ENCODE measurements at regions of chr13 and their contacts with region 1.

Region 1: GRCh38 chr13:46160471-46161066 is 21.4 kb downstream of the LCP1 start:
- DNase-seq: peak; percentile 85
- ATAC-seq: peak; percentile 66
- H3K4me3 ChIP-seq: no peak overlapping the region
- H3K4me3 Mint-ChIP-seq: peak overlapping the region; percentile 63
- H3K27ac ChIP-seq: peak overlapping the region; percentile 53 to 88
- H3K27ac Mint-ChIP-seq: peak overlapping the region; percentile 84
- H3K4me1 ChIP-seq: peaks cover 43 to 45% of the 10 kb centered on the region in 2 donors
- H3K4me1 Mint-ChIP-seq: peaks cover 50% of the 10 kb centered on the region
- H3K27me3 ChIP-seq: no peaks in the 10 kb centered on the region
- H3K27me3 Mint-ChIP-seq: no peaks in the 10 kb centered on the region
- CTCF ChIP-seq: peak; percentile 83

Region 2: DNA sequence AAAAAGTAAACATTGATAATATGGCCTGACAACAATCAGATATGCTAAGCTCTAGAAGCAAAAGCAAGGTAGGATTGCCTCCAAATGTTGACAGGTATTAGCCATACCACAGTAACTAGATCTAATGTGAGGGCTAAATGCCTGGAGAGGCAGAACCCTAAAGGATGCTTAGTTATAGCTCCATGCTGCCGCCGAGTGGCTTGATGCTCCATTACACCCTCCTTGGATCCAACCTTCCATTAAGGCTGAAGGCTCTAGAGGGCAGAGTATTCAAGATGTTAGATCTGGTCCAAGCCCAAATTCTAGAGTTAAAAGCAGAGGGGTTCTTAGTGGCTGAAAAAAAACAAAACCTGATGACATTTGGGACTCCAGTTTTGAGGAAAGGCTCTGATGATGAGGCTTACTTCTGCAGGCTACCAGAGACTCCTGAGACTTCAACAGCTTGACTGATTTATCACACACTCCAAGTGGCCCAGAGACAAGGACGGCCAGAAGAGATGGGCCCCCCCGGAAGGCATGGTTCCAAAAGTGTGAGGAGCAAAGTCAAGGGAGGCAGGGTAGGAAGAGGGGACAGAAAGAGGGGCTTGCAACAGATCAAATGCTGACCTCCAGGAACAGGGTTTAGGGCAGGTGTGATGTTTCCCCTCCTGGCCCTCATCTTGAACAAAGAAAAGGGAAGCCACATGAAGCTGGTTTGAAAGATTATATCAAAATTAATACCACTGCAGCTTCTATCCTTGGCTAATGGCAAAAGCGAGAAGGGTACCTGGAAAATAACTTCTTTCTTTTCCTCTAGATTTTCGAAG is 33.8 kb before region 1 on chr13:
- CTCF ChIA-PET with region 1: interaction called, 8 read pairs
- POLR2A ChIA-PET with region 1: no interaction called
- intact Hi-C with region 1: loop called (anchors 5 kb)
- DNase-seq: peak; percentile 74
- ATAC-seq: peak; percentile 92
- H3K4me3 ChIP-seq: no peak overlapping the region
- H3K4me3 Mint-ChIP-seq: no peak overlapping the region
- H3K27ac ChIP-seq: peak overlapping the region in 1 of 2 donors; percentile 78
- H3K27ac Mint-ChIP-seq: peak overlapping the region; percentile 88
- H3K4me1 ChIP-seq: peaks cover 13 to 16% of the 10 kb centered on the region in 2 donors
- H3K4me1 Mint-ChIP-seq: peaks cover 30% of the 10 kb centered on the region
- H3K27me3 ChIP-seq: no peaks in the 10 kb centered on the region
- H3K27me3 Mint-ChIP-seq: no peaks in the 10 kb centered on the region
- CTCF ChIP-seq: peak; percentile 80

Region 3: GRCh38 chr13:46146899-46147298 is 13.7 kb before region 1 on chr13:
- CTCF ChIA-PET with region 1: interaction called, 25 read pairs
- POLR2A ChIA-PET with region 1: no interaction called
- intact Hi-C with region 1: no loop called
- DNase-seq: no peak
- ATAC-seq: no peak
- H3K4me3 ChIP-seq: no peak overlapping the region
- H3K4me3 Mint-ChIP-seq: no peak overlapping the region
- H3K27ac ChIP-seq: no peak overlapping the region
- H3K27ac Mint-ChIP-seq: peak overlapping the region; percentile 20
- H3K4me1 ChIP-seq: no peaks in the 10 kb centered on the region
- H3K4me1 Mint-ChIP-seq: no peaks in the 10 kb centered on the region
- H3K27me3 ChIP-seq: no peaks in the 10 kb centered on the region
- H3K27me3 Mint-ChIP-seq: no peaks in the 10 kb centered on the region
- CTCF ChIP-seq: no peak

Region 4: DNA sequence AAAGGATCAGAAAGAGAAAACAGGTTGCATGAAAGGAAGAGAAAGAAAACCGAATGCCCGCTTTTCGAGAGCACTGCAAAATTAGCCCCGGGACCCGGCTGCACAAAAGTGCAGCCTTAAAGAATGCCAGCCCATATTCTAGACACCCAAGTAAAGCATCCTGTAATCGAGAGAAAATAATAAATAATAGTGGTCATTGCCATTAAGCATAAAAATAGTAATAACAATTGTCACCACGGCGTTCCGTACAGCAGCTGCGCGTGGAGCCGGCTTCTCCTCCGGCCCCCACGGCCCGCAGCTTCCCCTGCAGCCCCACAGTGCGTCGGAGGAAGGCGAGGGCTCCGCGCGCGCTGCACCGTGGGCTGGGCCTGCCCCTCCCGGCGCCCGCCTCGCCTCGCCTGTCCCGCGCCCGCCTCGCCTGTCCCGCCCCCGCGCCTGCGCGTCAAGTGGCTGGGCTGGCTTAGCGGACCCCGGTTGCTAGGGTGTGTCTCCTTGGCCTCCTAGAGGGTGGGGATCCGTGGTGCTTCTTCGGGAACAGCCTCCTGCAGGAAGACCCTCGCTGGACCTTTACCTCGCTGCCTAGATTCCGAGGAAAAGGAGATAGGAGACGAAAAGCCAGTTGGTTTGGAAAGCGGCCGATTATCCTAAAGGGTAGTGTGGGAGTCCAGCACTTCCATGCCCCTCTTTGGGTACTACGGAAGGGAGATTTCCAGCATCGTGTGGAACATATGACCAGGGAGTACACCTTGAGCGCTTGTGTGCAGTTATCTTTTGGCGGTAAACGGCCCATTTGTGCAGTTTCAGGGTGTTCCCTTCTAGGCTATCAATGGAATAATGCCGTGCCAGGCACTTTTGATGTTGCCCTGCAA is 51.1 kb after region 1 on chr13 and contains the start of gene LRRC63:
- CTCF ChIA-PET with region 1: interaction called, 4 read pairs
- POLR2A ChIA-PET with region 1: no interaction called
- intact Hi-C with region 1: loop called (anchors 1 kb)
- DNase-seq: peak; percentile 76
- ATAC-seq: peak; percentile 99
- H3K4me3 ChIP-seq: peak within 1 kb of the TSS; percentile 47 to 85 (median 63)
- H3K4me3 Mint-ChIP-seq: peak within 1 kb of the TSS; percentile 87
- H3K27ac ChIP-seq: no peak within 1 kb of the TSS
- H3K27ac Mint-ChIP-seq: peak within 1 kb of the TSS; percentile 59
- H3K4me1 ChIP-seq: peaks cover 10 to 11% of the 10 kb centered on the region in 2 donors
- H3K4me1 Mint-ChIP-seq: peaks cover 16% of the 10 kb centered on the region
- H3K27me3 ChIP-seq: no peaks in the 10 kb centered on the region
- H3K27me3 Mint-ChIP-seq: peaks cover 2% of the 10 kb centered on the region
- CTCF ChIP-seq: no peak
- total RNA-seq, gene LRRC63: 0.25 TPM in 1 of 2 replicates, not detected in the other

Region 5: DNA sequence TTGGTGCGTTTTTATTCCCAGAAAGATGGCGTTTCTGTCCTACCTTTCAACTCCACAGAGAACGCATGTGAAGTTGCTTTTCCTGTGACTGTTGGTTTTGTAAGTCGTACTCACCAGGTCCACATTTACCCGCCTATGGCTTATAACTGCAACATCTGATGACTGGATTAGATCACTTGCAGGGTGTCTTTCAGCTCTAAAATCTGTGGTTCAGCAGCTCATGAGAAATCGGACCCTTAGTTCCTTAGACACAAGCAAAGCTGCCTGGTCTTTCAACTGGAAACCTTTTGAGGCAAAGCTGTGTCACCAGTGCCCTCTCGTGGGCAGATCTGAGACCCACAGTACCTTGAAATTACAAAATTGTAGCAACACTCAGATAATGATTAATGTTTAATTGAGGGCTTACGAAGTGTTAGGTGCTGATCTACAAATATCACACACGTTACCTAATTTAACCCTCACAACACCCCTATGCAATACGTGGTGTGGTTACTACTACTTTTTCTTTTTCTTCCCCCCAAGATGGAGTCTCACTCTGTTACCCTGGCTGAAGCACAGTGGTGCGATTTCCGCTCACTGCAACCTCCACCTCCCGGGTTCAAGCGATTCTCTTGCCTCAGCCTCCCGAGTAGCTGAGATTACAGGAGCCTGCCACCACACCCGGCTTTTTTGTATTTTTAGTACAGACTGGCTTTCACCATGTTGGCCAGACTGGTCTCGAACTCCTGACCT is 161.1 kb after region 1 on chr13:
- CTCF ChIA-PET with region 1: interaction called, 12 read pairs
- POLR2A ChIA-PET with region 1: no interaction called
- intact Hi-C with region 1: loop called (anchors 2 kb)
- DNase-seq: peak; percentile 73
- ATAC-seq: peak; percentile 79
- H3K4me3 ChIP-seq: peak overlapping the region in 2 of 5 experiments; percentile 5 to 13
- H3K4me3 Mint-ChIP-seq: no peak overlapping the region
- H3K27ac ChIP-seq: no peak overlapping the region
- H3K27ac Mint-ChIP-seq: no peak overlapping the region
- H3K4me1 ChIP-seq: peaks cover 0 to 9% of the 10 kb centered on the region in 2 donors
- H3K4me1 Mint-ChIP-seq: peaks cover 13% of the 10 kb centered on the region
- H3K27me3 ChIP-seq: no peaks in the 10 kb centered on the region
- H3K27me3 Mint-ChIP-seq: no peaks in the 10 kb centered on the region
- CTCF ChIP-seq: peak; percentile 87

Measured in B cell (primary cell).